ENCODE measurements at regions of chrX and their contacts with region 1.

Region 1: DNA sequence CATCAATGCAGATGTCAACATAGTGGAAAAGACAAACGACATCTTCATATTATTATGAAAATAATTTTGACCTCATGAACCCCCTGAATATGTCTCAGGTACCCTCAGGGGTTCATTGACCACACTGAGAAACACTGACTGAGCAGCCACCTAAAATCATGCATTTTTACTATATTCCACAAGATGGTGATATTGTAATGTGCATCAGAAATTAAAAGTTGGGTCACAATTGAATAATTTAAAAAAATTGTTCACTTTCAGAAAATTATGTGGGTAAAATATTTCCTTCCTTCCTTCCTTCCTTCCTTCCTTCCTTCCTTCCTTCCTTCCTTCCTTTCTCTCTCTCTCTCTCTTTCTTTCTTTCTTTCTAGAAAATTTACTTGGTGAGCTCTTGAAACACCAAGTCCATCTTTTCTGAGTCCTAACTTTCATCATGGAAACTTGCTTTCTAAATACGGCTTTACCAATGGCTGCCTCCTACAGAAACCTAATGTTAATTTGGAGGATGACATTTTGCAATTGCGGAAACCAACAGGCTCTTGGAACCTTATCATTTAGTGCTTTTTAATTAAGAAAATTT is 103.6 kb downstream of the RTL3 start:
- DNase-seq: no peak
- ATAC-seq: no peak

Region 2: GRCh38 chrX:79081895-79082512 is 526.5 kb after region 1 on chrX:
- intact Hi-C with region 1: loop called (anchors 5 kb)
- DNase-seq: no peak
- ATAC-seq: no peak

Region 3: GRCh38 chrX:79412972-79413371 is 857.5 kb after region 1 on chrX:
- intact Hi-C with region 1: loop called (anchors 10 kb)
- DNase-seq: no peak
- ATAC-seq: no peak